ENCODE measurements at regions of chr1 and their contacts with region 1.

Region 1: GRCh38 chr1:110060034-110060661 is 10.3 kb downstream of the ALX3 start:
- DNase-seq: peak; percentile 78
- H3K4me3 Mint-ChIP-seq: no peak overlapping the region
- H3K27ac Mint-ChIP-seq: no peak overlapping the region
- H3K4me1 Mint-ChIP-seq: peaks cover 4% of the 10 kb centered on the region
- H3K27me3 Mint-ChIP-seq: no peaks in the 10 kb centered on the region

Region 2: GRCh38 chr1:110034451-110035235 is 25.5 kb before region 1 on chr1 and contains the start of gene STRIP1:
- CTCF ChIA-PET with region 1: interaction called, 18 read pairs
- POLR2A ChIA-PET with region 1: interaction called, 3 read pairs
- DNase-seq: peak; percentile 95
- H3K4me3 Mint-ChIP-seq: peak within 1 kb of the TSS; percentile 90
- H3K27ac Mint-ChIP-seq: peak within 1 kb of the TSS; percentile 74
- H3K4me1 Mint-ChIP-seq: peaks cover 62% of the 10 kb centered on the region
- H3K27me3 Mint-ChIP-seq: no peaks in the 10 kb centered on the region
- total RNA-seq, gene STRIP1: 34.1 to 34.7 TPM

Region 3: DNA sequence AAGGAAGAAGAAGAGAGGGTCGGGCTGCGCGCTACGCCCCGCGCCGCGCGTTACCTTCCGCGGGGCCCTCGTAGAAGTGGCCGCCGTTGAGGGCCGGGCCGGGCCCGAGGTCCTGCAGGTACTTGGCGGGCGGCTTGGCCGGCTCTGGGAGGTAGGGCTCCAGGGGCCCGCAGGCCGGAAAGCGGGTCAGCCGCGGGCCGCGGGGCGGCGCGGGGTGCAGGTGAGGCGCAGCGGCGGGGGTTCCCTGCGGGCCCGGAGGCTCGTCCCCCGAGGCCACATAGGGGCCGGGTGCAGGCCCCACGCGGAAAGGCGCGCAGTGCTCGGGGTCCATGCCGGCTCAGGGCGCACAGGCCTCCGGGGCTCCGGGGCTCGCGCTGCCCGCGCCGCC is 10.1 kb after region 1 on chr1:
- CTCF ChIA-PET with region 1: interaction called, 17 read pairs
- POLR2A ChIA-PET with region 1: interaction called, 3 read pairs
- DNase-seq: no peak
- H3K4me3 Mint-ChIP-seq: no peak overlapping the region
- H3K27ac Mint-ChIP-seq: no peak overlapping the region
- H3K4me1 Mint-ChIP-seq: peaks cover 11% of the 10 kb centered on the region
- H3K27me3 Mint-ChIP-seq: peaks cover 75% of the 10 kb centered on the region

Region 4: GRCh38 chr1:110082477-110082876 is 22.3 kb after region 1 on chr1:
- CTCF ChIA-PET with region 1: interaction called, 12 read pairs
- POLR2A ChIA-PET with region 1: no interaction called
- DNase-seq: no peak
- H3K4me3 Mint-ChIP-seq: no peak overlapping the region
- H3K27ac Mint-ChIP-seq: no peak overlapping the region
- H3K4me1 Mint-ChIP-seq: peaks cover 10% of the 10 kb centered on the region
- H3K27me3 Mint-ChIP-seq: peaks cover 51% of the 10 kb centered on the region

Region 5: DNA sequence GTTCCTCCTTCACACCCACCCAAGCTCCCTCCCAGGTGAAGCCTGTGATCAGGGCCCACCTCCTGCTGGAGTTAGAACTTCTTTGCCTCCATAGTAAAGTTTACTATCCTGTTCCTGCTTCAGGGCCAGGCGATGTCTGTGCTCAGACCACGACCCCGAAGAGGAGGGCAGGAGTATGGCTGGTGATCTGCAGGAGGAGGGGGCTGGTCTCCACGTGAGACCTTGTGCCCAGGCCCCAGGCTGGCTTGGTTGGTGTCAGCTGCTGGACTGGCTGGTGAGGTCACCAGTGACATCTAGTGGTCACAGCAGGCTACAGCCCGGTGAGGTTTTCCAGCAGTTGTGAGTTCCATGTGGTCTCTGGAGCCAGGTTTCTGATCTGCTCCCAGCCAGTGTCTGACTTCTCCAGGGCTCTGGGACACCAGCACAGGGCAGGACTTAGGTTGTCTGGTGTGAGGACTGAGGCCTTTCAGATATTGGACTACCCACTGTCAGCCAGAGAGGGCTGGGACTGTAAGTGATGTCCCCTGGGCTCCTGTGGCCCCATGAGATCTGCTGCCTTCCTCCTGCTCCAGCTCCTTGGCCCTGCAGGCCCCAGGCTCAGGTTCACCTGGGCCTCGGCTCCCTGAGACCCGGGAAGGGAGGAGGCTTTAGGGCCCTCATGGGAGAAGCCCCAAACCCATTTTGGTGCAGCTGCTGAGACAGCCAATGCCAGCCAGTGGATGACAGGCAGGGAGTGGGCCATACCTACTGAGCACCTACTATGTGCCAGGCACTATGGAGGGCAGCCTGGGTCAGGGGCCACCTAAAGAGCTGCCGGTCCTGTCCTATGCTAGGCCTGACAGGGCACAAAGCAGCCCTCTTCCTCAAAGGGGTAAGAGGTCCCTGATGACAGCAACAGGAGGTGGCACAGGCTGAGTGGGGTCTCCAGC is 46.1 kb after region 1 on chr1:
- CTCF ChIA-PET with region 1: interaction called, 18 read pairs
- POLR2A ChIA-PET with region 1: no interaction called
- DNase-seq: peak; percentile 65
- H3K4me3 Mint-ChIP-seq: no peak overlapping the region
- H3K27ac Mint-ChIP-seq: no peak overlapping the region
- H3K4me1 Mint-ChIP-seq: no peaks in the 10 kb centered on the region
- H3K27me3 Mint-ChIP-seq: peaks cover 24% of the 10 kb centered on the region

Region 6: DNA sequence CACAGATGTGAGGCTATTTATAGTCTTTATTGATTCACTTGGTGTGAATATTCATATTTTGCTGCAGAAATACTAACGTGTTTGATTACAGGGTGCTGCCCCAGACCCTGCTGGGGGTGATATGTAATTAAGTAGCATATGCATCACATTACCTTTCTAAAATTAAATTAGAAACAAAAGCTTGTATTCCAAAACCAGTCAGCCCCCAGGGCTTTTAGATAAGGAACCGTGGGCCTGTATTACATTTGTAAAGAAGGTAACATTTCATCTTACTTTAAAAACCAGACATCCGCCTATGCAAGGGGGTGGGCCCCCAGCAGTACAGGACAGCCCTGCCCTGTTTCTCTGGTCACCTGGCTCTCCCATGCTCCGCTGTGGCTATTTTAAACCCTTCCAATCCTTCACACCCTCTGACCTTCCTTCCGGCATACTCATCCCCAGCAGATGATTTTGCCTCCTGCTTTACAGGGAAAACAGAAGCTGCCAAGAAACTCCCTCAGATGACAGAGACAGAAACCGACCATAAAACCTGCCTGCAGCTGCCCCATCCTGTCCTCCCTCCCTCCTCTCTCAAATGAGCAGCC is 128.0 kb after region 1 on chr1:
- CTCF ChIA-PET with region 1: no interaction called
- POLR2A ChIA-PET with region 1: no interaction called
- DNase-seq: no peak
- H3K4me3 Mint-ChIP-seq: no peak overlapping the region
- H3K27ac Mint-ChIP-seq: no peak overlapping the region
- H3K4me1 Mint-ChIP-seq: no peaks in the 10 kb centered on the region
- H3K27me3 Mint-ChIP-seq: peaks cover 35% of the 10 kb centered on the region

Measured in activated CD4-positive, alpha-beta memory T cell treated with anti-CD3 and anti-CD28 coated beads, Interleukin-2, amount 10 ng/mL, durations not matched to agents 7 days and 5 days (primary cell).